Activated CD4-positive, alpha-beta T cell treated with anti-CD3 and anti-CD28 coated beads for 36 hours (primary cell): ENCODE measurements at regions of chr1 and their contacts with region 1.

Region 1: DNA sequence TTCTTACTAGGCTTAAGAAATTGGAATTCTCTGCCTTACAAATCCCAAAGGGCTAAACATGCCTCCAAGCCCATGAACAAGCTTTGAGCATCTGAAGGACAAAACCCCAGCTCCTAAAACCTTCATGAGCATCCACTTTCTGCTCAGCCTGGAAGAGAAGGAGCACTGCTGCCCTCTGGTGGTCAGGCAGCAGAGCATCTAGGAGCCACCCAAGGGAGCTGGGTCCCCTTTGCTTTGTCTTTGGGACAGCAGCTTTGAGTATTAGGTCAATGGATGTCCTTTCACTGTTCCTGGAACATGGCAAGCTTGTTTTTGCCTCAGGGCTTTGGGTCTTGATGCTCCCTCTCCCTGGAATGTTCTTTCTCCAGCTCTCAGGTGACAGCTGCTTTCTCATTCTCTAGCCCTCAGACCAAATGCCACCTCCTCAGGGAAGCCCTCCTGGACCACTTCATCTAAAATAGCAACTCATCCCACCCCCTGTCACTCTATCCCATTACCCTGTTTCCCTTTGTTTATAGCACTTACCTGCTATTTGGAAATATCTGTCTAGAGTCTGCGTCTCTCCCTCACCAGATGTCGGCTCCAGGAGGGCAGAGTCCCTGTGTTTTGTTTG is 25.7 kb downstream of the RAB7B start:
- DNase-seq: peak; percentile 90
- ATAC-seq: peak; percentile 89
- H3K4me3 Mint-ChIP-seq: no peak overlapping the region
- H3K27ac Mint-ChIP-seq: no peak overlapping the region
- H3K4me1 Mint-ChIP-seq: no peaks in the 10 kb centered on the region
- H3K27me3 Mint-ChIP-seq: no peaks in the 10 kb centered on the region

Region 2: DNA sequence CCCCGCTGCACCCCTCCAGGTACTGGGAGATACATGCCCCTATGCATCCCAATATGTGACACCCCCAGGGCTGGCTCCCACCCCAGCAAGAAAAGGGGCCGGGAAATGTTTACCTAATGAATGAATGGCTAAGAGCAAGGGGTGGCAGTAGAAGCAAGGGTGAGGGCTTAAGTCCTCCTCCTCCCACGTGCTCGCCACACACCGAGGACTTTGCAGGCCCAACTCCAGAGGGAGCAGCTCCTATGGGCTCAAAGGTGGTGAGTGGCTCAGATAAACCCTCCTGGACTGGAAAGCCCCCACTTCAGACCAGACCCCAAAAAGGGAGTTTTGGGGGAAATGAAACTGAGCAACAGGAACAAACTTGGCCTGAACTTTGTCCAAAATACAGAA is 308.6 kb before region 1 on chr1:
- CTCF ChIA-PET with region 1: no interaction called
- POLR2A ChIA-PET with region 1: no interaction called
- intact Hi-C with region 1: no loop called
- DNase-seq: no peak
- ATAC-seq: no peak
- H3K4me3 Mint-ChIP-seq: no peak overlapping the region
- H3K27ac Mint-ChIP-seq: no peak overlapping the region
- H3K4me1 Mint-ChIP-seq: no peaks in the 10 kb centered on the region
- H3K27me3 Mint-ChIP-seq: peaks cover 8% of the 10 kb centered on the region

Region 3: GRCh38 chr1:205711104-205712020 is 266.1 kb before region 1 on chr1:
- CTCF ChIA-PET with region 1: interaction called, 20 read pairs
- POLR2A ChIA-PET with region 1: no interaction called
- intact Hi-C with region 1: loop called in 1 of 2 experiments (anchors 5 kb)
- DNase-seq: peak; percentile 78
- ATAC-seq: peak; percentile 90
- H3K4me3 Mint-ChIP-seq: no peak overlapping the region
- H3K27ac Mint-ChIP-seq: peak overlapping the region; percentile 43
- H3K4me1 Mint-ChIP-seq: peaks cover 13% of the 10 kb centered on the region
- H3K27me3 Mint-ChIP-seq: no peaks in the 10 kb centered on the region

Region 4: DNA sequence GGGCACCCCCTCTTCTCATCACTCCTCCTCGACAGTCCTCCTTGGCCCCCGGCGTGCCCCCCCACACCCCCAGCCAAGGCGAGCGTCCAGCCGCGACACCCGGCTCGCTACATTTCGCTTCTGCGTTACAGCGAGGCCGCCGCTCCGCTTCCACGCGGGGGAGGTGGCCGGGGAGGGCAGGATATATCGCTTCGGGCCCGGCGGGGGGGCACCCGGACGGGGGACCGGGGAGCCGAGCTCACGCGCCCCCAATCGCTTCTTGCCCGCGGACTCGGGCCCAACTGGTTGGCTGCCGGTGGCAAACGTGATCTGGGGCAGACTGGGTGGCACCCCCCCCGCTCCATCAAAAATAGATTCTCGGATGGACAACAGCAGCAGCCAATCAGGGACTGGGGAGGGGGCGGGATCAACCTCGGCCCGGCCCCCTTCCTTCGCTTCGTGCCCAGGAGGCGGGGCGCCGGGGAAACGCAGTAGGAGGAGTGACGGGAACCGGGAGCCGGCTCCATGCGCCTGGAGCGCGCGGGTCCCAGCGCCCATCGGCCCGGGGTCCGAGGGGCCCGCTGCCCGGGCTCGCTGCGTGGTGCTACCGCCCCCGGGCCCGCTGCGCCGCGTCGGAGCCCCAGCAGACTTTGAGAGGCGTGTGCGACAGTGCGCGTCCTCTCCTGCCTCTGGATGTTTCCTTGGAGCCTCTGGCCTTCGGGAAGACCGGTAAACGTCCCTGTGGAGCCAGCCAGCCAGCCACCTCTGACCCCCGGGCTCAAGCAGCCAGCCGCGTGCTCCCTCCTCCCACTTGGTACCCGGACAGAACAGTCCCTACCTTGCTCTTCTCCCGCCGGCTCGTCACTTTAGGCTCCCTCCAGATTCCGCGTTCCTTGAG is 164.4 kb before region 1 on chr1 and contains the start of gene SLC41A1:
- CTCF ChIA-PET with region 1: interaction called, 11 read pairs
- POLR2A ChIA-PET with region 1: no interaction called
- intact Hi-C with region 1: no loop called
- DNase-seq: peak; percentile 94
- ATAC-seq: peak; percentile 96
- H3K4me3 Mint-ChIP-seq: peak within 1 kb of the TSS; percentile 81
- H3K27ac Mint-ChIP-seq: peak within 1 kb of the TSS; percentile 84
- H3K4me1 Mint-ChIP-seq: peaks cover 47% of the 10 kb centered on the region
- H3K27me3 Mint-ChIP-seq: no peaks in the 10 kb centered on the region
- total RNA-seq, gene SLC41A1: 34.4 to 41.5 TPM

Region 5: GRCh38 chr1:205878026-205878425 is 99.5 kb before region 1 on chr1:
- CTCF ChIA-PET with region 1: no interaction called
- POLR2A ChIA-PET with region 1: no interaction called
- intact Hi-C with region 1: no loop called
- DNase-seq: no peak
- ATAC-seq: no peak
- H3K4me3 Mint-ChIP-seq: no peak overlapping the region
- H3K27ac Mint-ChIP-seq: no peak overlapping the region
- H3K4me1 Mint-ChIP-seq: no peaks in the 10 kb centered on the region
- H3K27me3 Mint-ChIP-seq: peaks cover 8% of the 10 kb centered on the region

Region 6: GRCh38 chr1:205919026-205919746 is 58.3 kb before region 1 on chr1:
- CTCF ChIA-PET with region 1: interaction called, 232 read pairs
- POLR2A ChIA-PET with region 1: interaction called, 4 read pairs
- intact Hi-C with region 1: loop called (anchors 1 kb)
- DNase-seq: peak; percentile 86
- ATAC-seq: peak; percentile 86
- H3K4me3 Mint-ChIP-seq: no peak overlapping the region
- H3K27ac Mint-ChIP-seq: no peak overlapping the region
- H3K4me1 Mint-ChIP-seq: no peaks in the 10 kb centered on the region
- H3K27me3 Mint-ChIP-seq: no peaks in the 10 kb centered on the region

Region 7: DNA sequence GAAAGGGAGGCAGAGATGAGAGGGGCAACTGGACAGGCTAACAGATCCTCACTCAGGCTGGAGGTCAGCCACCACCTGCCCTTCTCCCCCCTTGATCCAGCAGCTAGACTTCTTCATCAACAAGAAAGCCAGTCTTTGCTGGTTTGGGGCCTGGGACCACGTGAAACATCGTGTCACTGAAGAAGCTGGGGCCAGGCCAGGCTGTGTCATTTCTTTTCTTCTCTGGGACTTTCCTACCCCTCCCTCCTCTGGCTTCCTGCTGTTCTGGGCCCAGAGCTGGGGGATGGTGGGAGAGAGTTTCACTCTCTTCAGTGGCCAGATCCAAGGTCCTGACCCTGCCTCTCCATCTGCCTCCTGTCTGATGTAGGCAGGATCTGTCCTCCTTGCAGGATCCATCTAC is 16.1 kb before region 1 on chr1:
- CTCF ChIA-PET with region 1: interaction called, 23 read pairs
- POLR2A ChIA-PET with region 1: no interaction called
- intact Hi-C with region 1: no loop called
- DNase-seq: peak; percentile 64
- ATAC-seq: peak; percentile 89
- H3K4me3 Mint-ChIP-seq: no peak overlapping the region
- H3K27ac Mint-ChIP-seq: peak overlapping the region; percentile 44
- H3K4me1 Mint-ChIP-seq: peaks cover 9% of the 10 kb centered on the region
- H3K27me3 Mint-ChIP-seq: peaks cover 4% of the 10 kb centered on the region

Region 8: DNA sequence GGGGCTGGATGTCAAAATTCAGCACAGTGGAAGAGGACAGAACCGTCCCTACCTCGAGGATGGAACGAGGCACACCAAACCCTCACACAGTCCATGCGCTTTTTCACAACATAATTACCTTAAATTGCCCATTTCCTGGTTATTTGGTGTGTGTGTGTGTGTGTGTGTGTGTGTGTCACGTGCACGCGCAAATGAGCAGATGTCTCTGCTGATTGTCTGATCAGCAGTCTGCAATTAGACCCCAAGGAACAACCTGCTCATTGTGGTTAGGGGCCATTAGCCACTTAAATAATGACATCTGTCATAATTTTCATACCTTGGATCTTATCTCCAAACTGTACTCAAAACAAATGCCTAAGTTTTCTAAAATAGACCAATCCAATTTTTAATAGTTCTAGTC is 116.5 kb after region 1 on chr1:
- CTCF ChIA-PET with region 1: interaction called, 16 read pairs
- POLR2A ChIA-PET with region 1: no interaction called
- intact Hi-C with region 1: no loop called
- DNase-seq: no peak
- ATAC-seq: no peak
- H3K4me3 Mint-ChIP-seq: no peak overlapping the region
- H3K27ac Mint-ChIP-seq: no peak overlapping the region
- H3K4me1 Mint-ChIP-seq: no peaks in the 10 kb centered on the region
- H3K27me3 Mint-ChIP-seq: peaks cover 5% of the 10 kb centered on the region

Region 9: GRCh38 chr1:206716870-206717673 is 739.6 kb after region 1 on chr1:
- CTCF ChIA-PET with region 1: no interaction called
- POLR2A ChIA-PET with region 1: no interaction called
- intact Hi-C with region 1: no loop called
- DNase-seq: peak; percentile 45
- ATAC-seq: peak; percentile 71
- H3K4me3 Mint-ChIP-seq: no peak overlapping the region
- H3K27ac Mint-ChIP-seq: peak overlapping the region; percentile 89
- H3K4me1 Mint-ChIP-seq: peaks cover 77% of the 10 kb centered on the region
- H3K27me3 Mint-ChIP-seq: no peaks in the 10 kb centered on the region